OCI-LY7 (cell line): ENCODE measurements at regions of chr12 and their contacts with region 1.

Region 1: DNA sequence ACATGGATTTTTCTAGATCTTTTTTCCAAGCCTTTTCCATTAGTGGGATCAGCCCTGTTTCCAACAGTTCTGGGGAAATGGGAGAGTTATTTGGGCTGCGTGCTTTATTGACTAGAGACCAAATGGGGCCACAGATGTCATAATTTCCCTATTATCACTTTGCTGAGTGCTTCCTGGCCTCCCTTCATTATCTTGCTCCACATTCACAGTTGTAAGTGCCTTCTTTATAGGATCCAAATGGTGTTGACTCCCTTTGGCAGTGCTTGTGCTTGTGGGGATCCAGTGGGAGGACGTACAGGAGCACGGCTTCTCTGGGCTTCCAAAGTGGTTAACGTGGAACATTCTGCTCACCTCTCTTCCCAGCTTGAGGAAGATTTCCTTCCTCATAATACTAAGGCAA is 141.0 kb upstream of the RMST start:
- DNase-seq: no peak
- H3K4me3 ChIP-seq: no peak overlapping the region
- H3K27ac ChIP-seq: no peak overlapping the region
- H3K4me1 ChIP-seq: no peaks in the 10 kb centered on the region
- CTCF ChIP-seq: no peak

Region 2: DNA sequence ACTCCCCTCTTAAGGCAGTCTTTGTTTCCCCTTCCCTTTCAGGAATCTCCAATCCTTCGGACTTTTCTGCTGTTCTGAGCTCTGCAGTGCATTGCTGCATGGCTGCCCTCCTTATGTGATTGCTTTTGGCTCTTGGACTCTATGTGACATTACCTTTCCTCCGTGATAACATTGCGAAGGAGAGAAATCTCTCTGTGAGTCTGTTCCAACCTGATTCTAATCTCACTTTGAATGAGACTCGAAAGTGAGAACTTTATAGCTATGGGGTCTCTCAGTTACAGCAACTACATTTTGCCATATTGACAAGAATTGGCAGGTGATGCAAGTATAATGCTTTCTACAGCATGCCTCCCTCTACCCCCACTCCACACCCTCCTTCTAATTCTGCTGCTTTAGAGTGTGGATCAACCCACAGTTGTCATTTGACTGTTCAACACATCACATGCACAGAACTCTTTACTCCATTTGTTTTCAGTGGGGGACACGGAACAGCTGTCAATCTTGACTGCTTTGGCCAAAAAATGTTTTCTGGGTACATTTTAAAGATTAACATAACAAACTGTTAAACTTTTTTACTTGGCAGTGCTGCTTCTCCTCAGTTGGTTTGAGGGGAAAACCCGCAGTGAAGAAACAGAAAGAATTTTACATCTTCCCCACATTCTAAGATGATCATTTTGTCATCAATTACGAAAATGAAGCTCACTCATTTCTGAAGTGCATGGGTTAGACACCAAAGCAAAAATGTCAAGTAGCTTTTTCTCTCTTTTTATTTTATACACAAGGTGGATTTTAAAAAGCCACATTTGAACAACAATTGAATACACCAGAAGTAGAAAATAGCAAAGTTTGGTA is 15.5 kb after region 1 on chr12:
- CTCF ChIA-PET with region 1: no interaction called
- POLR2A ChIA-PET with region 1: interaction called, 11 read pairs
- intact Hi-C with region 1: no loop called
- DNase-seq: no peak
- H3K4me3 ChIP-seq: no peak overlapping the region
- H3K27ac ChIP-seq: no peak overlapping the region
- H3K4me1 ChIP-seq: no peaks in the 10 kb centered on the region
- CTCF ChIP-seq: no peak